ENCODE measurements at regions of chr4 and their contacts with region 1.

Region 1: GRCh38 chr4:166324321-166324720 is 451.3 kb downstream of the TLL1 start:
- DNase-seq: peak; percentile 62 to 64
- H3K4me3 ChIP-seq: no peak overlapping the region
- H3K4me3 Mint-ChIP-seq: no peak overlapping the region
- H3K27ac Mint-ChIP-seq: no peak overlapping the region
- H3K4me1 ChIP-seq: no peaks in the 10 kb centered on the region
- H3K4me1 Mint-ChIP-seq: no peaks in the 10 kb centered on the region
- H3K27me3 ChIP-seq: no peaks in the 10 kb centered on the region
- H3K27me3 Mint-ChIP-seq: no peaks in the 10 kb centered on the region
- CTCF ChIP-seq: peak; percentile 63 to 77

Region 2: DNA sequence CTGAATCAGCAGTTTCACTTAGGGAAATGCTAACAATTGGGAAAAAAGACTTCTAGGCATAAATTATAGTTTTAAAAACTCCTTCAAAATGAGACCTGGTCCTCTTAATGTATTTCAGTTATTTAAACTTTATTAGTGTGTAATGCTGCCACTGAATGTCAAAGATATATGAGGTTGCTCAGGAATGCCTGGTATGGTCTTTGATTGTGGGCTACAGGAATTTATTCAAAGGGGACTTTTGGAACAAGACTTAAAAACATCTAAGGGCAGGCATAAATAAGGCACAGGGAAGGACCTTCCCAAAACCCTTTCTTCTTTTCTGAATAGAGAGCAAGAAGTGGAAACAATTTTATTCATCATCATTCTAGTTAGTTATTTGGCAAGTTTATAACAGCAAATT is 12.2 kb before region 1 on chr4:
- CTCF ChIA-PET with region 1: no interaction called
- POLR2A ChIA-PET with region 1: no interaction called
- intact Hi-C with region 1: no loop called
- DNase-seq: no peak
- H3K4me3 ChIP-seq: no peak overlapping the region
- H3K4me3 Mint-ChIP-seq: no peak overlapping the region
- H3K27ac Mint-ChIP-seq: no peak overlapping the region
- H3K4me1 ChIP-seq: no peaks in the 10 kb centered on the region
- H3K4me1 Mint-ChIP-seq: no peaks in the 10 kb centered on the region
- H3K27me3 ChIP-seq: no peaks in the 10 kb centered on the region
- H3K27me3 Mint-ChIP-seq: peaks cover 2% of the 10 kb centered on the region
- CTCF ChIP-seq: no peak

Region 3: DNA sequence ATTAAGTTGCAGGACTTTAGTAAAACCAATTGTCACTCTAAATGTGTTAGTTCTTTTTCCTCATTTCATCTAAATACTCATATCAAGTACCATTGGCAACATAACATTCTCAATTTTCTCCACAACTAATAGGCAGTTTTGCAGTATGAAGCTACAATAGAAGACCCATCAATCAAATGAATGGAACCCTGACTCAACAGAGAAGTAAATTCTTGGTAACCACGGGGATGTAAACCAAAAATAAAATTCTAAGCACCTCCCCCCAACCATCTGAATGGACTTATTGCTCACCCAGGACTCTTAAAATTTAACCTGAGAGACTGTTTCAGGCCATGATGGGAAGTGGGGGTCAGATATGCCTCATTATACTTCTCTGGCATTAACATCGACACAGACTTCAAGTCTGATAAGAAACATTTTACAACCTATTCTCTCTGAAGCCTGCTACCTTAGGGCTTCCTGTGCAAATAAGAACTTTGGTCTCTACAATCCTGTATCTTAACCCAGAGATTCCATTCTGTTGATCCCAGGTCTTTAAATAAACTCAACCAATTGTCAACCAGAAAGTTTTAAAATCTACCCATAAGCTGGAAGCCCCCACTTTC is 169.6 kb after region 1 on chr4:
- CTCF ChIA-PET with region 1: no interaction called
- POLR2A ChIA-PET with region 1: no interaction called
- intact Hi-C with region 1: loop called (anchors 5 kb)
- DNase-seq: peak; percentile 67 to 70
- H3K4me3 ChIP-seq: no peak overlapping the region
- H3K4me3 Mint-ChIP-seq: peak overlapping the region; percentile 52
- H3K27ac Mint-ChIP-seq: peak overlapping the region; percentile 40
- H3K4me1 ChIP-seq: peaks cover 33% of the 10 kb centered on the region
- H3K4me1 Mint-ChIP-seq: peaks cover 33% of the 10 kb centered on the region
- H3K27me3 ChIP-seq: no peaks in the 10 kb centered on the region
- H3K27me3 Mint-ChIP-seq: no peaks in the 10 kb centered on the region
- CTCF ChIP-seq: no peak

Region 4: DNA sequence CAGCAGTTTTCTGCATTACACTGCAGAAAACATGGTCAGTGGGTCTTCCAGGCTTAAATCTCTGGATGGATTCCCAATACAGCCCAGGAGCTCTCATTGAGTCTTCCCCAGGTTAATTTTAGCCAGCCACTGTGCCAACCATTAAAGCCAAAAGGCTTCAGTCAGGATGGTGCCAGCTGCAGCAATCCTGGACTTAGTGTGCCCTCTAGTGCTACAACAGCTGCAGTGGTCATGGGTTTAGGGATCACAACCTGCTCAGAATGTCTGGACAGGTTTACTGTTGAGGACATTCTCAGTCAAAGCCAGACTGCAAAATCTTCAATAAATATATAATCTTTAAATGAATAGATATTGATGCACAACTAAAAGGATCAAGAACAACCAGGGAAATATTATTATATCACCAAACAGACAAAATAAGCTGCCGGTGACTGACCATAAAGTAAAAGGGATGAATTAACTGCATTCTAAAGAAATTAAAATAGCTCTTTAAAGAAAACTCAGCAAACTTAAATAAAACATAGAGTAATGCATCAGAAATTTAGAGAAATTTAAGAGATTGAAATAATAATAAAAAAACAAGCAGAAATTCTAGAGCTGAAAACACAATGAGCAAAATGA is 270.1 kb after region 1 on chr4:
- CTCF ChIA-PET with region 1: no interaction called
- POLR2A ChIA-PET with region 1: no interaction called
- intact Hi-C with region 1: loop called (anchors 1 kb)
- DNase-seq: peak; percentile 52 to 55
- H3K4me3 ChIP-seq: no peak overlapping the region
- H3K4me3 Mint-ChIP-seq: no peak overlapping the region
- H3K27ac Mint-ChIP-seq: no peak overlapping the region
- H3K4me1 ChIP-seq: no peaks in the 10 kb centered on the region
- H3K4me1 Mint-ChIP-seq: no peaks in the 10 kb centered on the region
- H3K27me3 ChIP-seq: no peaks in the 10 kb centered on the region
- H3K27me3 Mint-ChIP-seq: no peaks in the 10 kb centered on the region
- CTCF ChIP-seq: peak; percentile 68 to 81